Ovary (tissue), 10 donors: ENCODE measurements at regions of chr3 and their contacts with region 1.

Region 1: DNA sequence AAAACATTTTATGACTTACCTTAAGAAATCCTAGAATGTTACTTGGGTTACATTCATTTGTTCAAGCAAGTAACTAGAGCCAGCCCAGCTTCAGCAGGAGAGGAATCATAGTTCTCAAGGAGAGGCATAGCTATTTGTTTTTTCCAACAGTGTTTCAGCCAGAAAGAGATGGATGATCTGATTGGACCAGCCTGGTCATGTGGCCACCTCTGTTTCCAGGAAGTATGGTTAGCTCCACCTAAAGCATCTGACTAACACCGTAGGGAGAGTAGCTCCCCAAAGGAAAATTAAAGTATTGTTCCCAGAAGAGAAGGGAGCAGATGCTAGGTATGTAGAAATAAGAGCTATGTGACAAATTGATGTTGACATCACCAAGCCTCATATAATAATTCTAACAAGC is 417.1 kb downstream of the TAFA4 start:
- DNase-seq: no peak
- H3K4me3 ChIP-seq: no peak overlapping the region
- H3K27ac ChIP-seq: no peak overlapping the region
- H3K4me1 ChIP-seq: no peaks in the 10 kb centered on the region
- H3K27me3 ChIP-seq: no peaks in the 10 kb centered on the region
- CTCF ChIP-seq: no peak
- EP300 ChIP-seq: no peak
- POLR2A ChIP-seq: no peak

Region 2: DNA sequence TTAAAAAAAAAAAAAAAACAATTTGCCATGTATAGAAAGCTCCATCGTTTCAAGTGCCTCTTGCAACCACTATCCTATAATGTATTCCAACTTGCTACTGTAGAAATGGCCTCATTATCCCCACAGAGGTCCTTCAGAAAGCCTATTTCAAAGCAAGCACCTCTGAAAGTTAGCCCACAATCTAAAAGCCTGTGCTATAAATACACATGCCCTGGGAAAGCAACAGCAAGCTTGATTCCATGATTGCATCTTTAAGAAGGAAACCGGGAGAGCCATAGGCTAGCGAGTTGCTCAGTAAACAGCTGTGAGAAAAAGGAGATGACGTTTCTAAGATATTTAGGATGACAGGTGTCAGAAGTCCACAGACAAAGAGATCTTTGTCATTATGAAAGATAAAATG is 388.8 kb after region 1 on chr3:
- intact Hi-C with region 1: loop called in 1 of 4 experiments (anchors 10 kb)
- DNase-seq: no peak
- H3K4me3 ChIP-seq: no peak overlapping the region
- H3K27ac ChIP-seq: no peak overlapping the region
- H3K4me1 ChIP-seq: no peaks in the 10 kb centered on the region
- H3K27me3 ChIP-seq: no peaks in the 10 kb centered on the region
- CTCF ChIP-seq: no peak
- EP300 ChIP-seq: no peak
- POLR2A ChIP-seq: no peak